Psoas muscle (tissue), 8 donors: ENCODE measurements at regions of chr2 and their contacts with region 1.

Region 1: DNA sequence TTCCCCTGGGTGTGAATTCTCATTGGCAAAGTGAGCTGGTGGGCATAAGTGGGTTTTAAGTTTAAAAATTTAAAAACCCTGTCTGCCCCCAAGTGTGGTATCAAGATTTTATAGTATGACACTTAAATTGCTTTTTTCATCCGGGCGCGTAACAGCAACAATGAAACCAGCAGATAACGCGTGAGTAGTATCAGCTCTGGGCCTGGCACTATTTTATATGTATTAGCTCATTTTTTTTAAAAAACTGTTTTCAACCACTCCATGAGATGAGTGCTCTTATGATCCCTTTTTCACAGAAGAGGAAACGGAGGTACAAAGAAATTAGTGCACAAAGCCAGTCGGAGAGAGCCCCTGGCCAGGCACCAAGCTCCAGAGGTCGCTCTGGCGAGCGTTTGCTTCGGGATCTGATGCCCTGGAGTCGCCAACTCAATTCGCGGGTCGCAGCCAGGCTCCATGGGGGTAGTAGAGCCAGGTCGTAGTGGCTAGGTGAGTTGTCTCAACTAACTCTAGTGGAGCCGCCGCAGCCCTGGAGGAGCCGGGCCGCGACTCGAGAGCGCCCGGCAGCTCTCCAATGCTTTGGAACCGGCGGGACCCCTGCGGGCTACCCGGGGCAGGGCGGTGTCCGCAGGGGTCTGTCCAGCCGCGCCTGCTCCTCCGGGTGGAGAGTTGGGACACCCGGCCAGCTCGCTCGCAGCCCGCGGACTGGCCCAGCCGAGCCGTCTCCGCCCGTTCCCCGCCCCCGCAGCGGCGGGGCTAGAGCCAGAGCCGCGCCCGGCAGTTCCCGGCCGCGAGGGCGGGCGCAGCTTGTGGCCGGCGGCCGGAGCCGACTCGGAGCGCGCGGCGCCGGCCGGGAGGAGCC is at the start of gene IL1R1:
- DNase-seq: peak; percentile 89 to 91
- ATAC-seq: peak; percentile 84 to 93 (median 90)
- H3K4me3 ChIP-seq: peak within 1 kb of the TSS; percentile 87
- H3K27ac ChIP-seq: peak within 1 kb of the TSS; percentile 92
- H3K4me1 ChIP-seq: peaks cover 14% of the 10 kb centered on the region
- H3K27me3 ChIP-seq: no peaks in the 10 kb centered on the region
- CTCF ChIP-seq: no peak
- total RNA-seq, gene IL1R1: 15.9 to 39.8 (median 26.8) TPM

Region 2: DNA sequence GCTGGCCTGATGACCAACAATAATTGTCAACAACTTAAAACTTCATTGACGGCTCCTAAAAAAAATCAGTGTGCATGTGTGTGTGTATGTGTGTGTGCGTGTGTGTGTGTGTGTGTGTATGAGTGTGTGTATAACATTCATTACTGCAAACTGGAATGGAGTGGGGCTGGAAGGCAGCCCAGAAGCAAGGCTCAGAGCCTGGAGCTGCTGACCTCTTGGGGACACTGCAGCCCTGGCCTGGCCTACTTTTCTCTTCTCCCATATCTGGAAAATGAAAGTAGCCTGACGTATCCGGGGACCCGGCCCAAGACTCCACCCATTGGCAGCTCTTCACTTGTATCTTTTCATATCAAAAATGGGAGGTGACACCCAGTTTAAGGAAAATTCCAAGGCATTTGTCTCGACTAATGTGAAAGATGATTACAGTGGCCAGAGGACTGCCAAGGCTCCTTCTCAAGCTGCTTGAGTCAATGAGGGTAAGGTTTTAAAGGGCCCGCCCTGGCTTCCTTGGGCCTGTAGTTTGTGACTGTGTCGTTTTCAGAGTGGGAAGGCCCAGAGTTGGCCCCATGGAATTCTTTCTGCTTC is 72.0 kb before region 1 on chr2:
- intact Hi-C with region 1: loop called in 1 of 2 experiments (anchors 2 kb)
- DNase-seq: peak; percentile 90 to 96
- ATAC-seq: peak; percentile 85 to 95 (median 91)
- H3K4me3 ChIP-seq: peak overlapping the region; percentile 66
- H3K27ac ChIP-seq: peak overlapping the region; percentile 95
- H3K4me1 ChIP-seq: peaks cover 42% of the 10 kb centered on the region
- H3K27me3 ChIP-seq: no peaks in the 10 kb centered on the region
- CTCF ChIP-seq: no peak

Region 3: GRCh38 chr2:102103992-102104871 is 38.0 kb before region 1 on chr2:
- intact Hi-C with region 1: loop called in 1 of 2 experiments (anchors 5 kb)
- DNase-seq: peak; percentile 82 to 90
- ATAC-seq: peak; percentile 79 to 93 (median 85)
- H3K4me3 ChIP-seq: peak overlapping the region; percentile 62
- H3K27ac ChIP-seq: peak overlapping the region; percentile 81
- H3K4me1 ChIP-seq: peaks cover 41% of the 10 kb centered on the region
- H3K27me3 ChIP-seq: no peaks in the 10 kb centered on the region
- CTCF ChIP-seq: no peak